Caco-2 (cell line): ENCODE measurements at regions of chr11 and their contacts with region 1.

Region 1: GRCh38 chr11:128021349-128022006 is 565.9 kb downstream of the ETS1 start:
- DNase-seq: peak in 1 of 2 experiments; percentile 44
- H3K4me3 ChIP-seq: no peak overlapping the region
- H3K4me3 Mint-ChIP-seq: no peak overlapping the region
- H3K27ac Mint-ChIP-seq: no peak overlapping the region
- H3K4me1 ChIP-seq: no peaks in the 10 kb centered on the region
- H3K4me1 Mint-ChIP-seq: no peaks in the 10 kb centered on the region
- H3K27me3 ChIP-seq: no peaks in the 10 kb centered on the region; the same call in 1 of the 2 replicates
- H3K27me3 Mint-ChIP-seq: peaks cover 10% of the 10 kb centered on the region
- CTCF ChIP-seq: peak; percentile 57 to 66

Region 2: DNA sequence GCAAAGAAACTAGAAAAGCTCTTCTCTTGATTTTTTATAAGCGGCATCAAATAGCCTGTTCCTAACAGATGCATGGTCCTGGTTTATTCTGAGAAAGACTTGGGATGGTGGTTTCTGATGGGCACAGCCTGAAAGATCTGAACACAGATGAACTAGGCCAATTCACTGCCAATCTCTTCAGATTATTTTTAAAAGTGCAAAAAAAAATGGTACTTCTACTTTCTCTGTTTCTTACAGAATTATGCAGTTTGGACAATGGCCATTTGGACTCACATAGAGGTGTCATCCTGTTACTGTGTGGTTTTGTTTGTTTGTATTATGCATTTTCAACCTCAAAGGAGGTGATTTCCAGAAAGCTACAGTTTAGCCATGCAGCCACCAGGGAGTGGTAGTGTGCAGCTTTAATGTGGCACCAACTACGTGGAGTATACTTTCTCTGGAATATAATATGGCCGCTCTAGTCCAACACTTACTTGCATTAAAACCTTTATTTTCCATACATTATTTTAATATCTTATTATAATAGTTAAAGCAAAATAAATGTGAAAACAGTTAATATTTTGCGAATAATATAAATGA is 551.1 kb before region 1 on chr11:
- CTCF ChIA-PET with region 1: no interaction called
- POLR2A ChIA-PET with region 1: no interaction called
- intact Hi-C with region 1: loop called (anchors 1 kb)
- DNase-seq: peak in 1 of 2 experiments; percentile 29
- H3K4me3 ChIP-seq: no peak overlapping the region
- H3K4me3 Mint-ChIP-seq: no peak overlapping the region
- H3K27ac Mint-ChIP-seq: no peak overlapping the region
- H3K4me1 ChIP-seq: no peaks in the 10 kb centered on the region; the same call in 1 of the 2 replicates
- H3K4me1 Mint-ChIP-seq: no peaks in the 10 kb centered on the region
- H3K27me3 ChIP-seq: no peaks in the 10 kb centered on the region
- H3K27me3 Mint-ChIP-seq: peaks cover 18% of the 10 kb centered on the region
- CTCF ChIP-seq: peak; percentile 24 to 35

Region 3: GRCh38 chr11:127843483-127844396 is 177.7 kb before region 1 on chr11:
- CTCF ChIA-PET with region 1: interaction called, 3 read pairs
- POLR2A ChIA-PET with region 1: no interaction called
- intact Hi-C with region 1: loop called (anchors 1 kb)
- DNase-seq: peak; percentile 79 to 83
- H3K4me3 ChIP-seq: no peak overlapping the region
- H3K4me3 Mint-ChIP-seq: no peak overlapping the region
- H3K27ac Mint-ChIP-seq: no peak overlapping the region
- H3K4me1 ChIP-seq: no peaks in the 10 kb centered on the region
- H3K4me1 Mint-ChIP-seq: no peaks in the 10 kb centered on the region
- H3K27me3 ChIP-seq: no peaks in the 10 kb centered on the region
- H3K27me3 Mint-ChIP-seq: no peaks in the 10 kb centered on the region
- CTCF ChIP-seq: peak; percentile 90 to 91

Region 4: DNA sequence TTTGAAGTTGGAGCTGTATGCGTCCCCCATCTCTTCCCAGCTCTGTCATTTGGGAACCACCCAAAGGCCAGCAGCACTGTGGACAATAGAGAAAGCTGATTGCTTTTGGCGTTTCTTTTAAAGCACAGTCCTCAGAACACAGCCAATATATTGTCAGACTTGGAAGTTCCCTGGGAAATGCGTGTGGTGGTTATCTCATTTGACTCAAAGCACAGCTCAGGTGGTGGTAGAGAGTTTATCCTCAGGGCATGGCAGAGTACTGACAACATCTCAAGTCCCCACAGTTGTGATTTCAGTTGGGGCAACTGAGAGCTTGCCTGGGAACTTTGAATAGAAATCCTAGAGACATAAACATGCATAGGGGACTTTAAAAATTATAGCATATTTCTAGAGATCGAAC is 35.4 kb before region 1 on chr11:
- CTCF ChIA-PET with region 1: no interaction called
- POLR2A ChIA-PET with region 1: no interaction called
- intact Hi-C with region 1: no loop called
- DNase-seq: no peak
- H3K4me3 ChIP-seq: no peak overlapping the region
- H3K4me3 Mint-ChIP-seq: no peak overlapping the region
- H3K27ac Mint-ChIP-seq: no peak overlapping the region
- H3K4me1 ChIP-seq: no peaks in the 10 kb centered on the region
- H3K4me1 Mint-ChIP-seq: no peaks in the 10 kb centered on the region
- H3K27me3 ChIP-seq: no peaks in the 10 kb centered on the region
- H3K27me3 Mint-ChIP-seq: peaks cover 3% of the 10 kb centered on the region
- CTCF ChIP-seq: no peak

Region 5: DNA sequence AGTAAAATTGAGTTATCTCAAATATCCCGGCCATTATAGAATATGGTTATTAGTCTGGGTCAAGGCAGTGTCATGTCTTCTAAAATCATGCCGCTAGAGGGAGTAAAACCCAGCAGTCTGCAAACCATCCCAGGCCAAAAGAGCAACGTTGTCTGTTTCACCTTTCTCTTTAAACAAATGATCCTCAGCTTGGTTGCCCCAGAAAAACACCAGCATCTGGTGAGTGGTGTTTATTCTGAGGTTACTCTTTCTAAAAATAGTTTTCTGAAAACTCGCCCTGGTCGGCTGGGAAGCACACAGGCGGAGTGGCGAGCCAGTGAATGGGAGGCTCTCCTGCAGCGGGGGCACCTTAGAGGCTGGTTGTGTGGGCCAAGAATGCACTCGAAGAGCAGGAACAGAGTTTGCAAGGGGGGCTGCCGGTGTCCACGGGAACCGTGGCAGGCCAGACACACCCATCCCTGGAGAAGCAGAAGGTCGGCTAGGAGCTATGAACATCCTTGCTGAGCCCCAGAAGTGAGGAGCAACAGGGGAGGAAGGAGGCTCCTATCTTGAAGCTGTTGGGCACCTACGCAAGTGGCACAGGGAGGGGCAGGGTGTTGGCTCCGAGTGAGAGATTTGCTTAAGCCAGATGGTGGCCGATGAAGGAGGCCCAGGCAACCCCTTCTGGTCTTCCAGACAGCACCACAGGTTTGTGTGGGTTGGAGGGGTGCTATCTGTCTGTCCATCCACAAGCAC is 268.8 kb after region 1 on chr11:
- CTCF ChIA-PET with region 1: no interaction called
- POLR2A ChIA-PET with region 1: no interaction called
- intact Hi-C with region 1: no loop called
- DNase-seq: peak in 1 of 2 experiments; percentile 78
- H3K4me3 ChIP-seq: no peak overlapping the region
- H3K4me3 Mint-ChIP-seq: no peak overlapping the region
- H3K27ac Mint-ChIP-seq: no peak overlapping the region
- H3K4me1 ChIP-seq: no peaks in the 10 kb centered on the region
- H3K4me1 Mint-ChIP-seq: no peaks in the 10 kb centered on the region
- H3K27me3 ChIP-seq: no peaks in the 10 kb centered on the region; the same call in 1 of the 2 replicates
- H3K27me3 Mint-ChIP-seq: peaks cover 14% of the 10 kb centered on the region
- CTCF ChIP-seq: peak; percentile 88 to 95